A673 (cell line): ENCODE measurements at regions of chr1 and their contacts with region 1.

Region 1: GRCh38 chr1:111441573-111442192 is 7.4 kb downstream of the WDR77 start:
- DNase-seq: peak; percentile 24
- H3K4me3 ChIP-seq: no peak overlapping the region
- H3K27ac ChIP-seq: no peak overlapping the region
- H3K4me1 ChIP-seq: no peaks in the 10 kb centered on the region
- H3K27me3 ChIP-seq: no peaks in the 10 kb centered on the region
- CTCF ChIP-seq: peak; percentile 63

Region 2: GRCh38 chr1:111516005-111516535 is 74.4 kb after region 1 on chr1:
- CTCF ChIA-PET with region 1: no interaction called
- POLR2A ChIA-PET with region 1: no interaction called
- intact Hi-C with region 1: no loop called
- DNase-seq: peak; percentile 28
- H3K4me3 ChIP-seq: no peak overlapping the region
- H3K27ac ChIP-seq: no peak overlapping the region
- H3K4me1 ChIP-seq: no peaks in the 10 kb centered on the region
- H3K27me3 ChIP-seq: peaks cover 8% of the 10 kb centered on the region
- CTCF ChIP-seq: peak; percentile 40

Region 3: GRCh38 chr1:111592389-111593361 is 151.0 kb after region 1 on chr1:
- CTCF ChIA-PET with region 1: no interaction called
- POLR2A ChIA-PET with region 1: interaction called, 20 read pairs
- intact Hi-C with region 1: no loop called
- DNase-seq: peak; percentile 68
- H3K4me3 ChIP-seq: no peak overlapping the region
- H3K27ac ChIP-seq: no peak overlapping the region
- H3K4me1 ChIP-seq: peaks cover 13% of the 10 kb centered on the region
- H3K27me3 ChIP-seq: no peaks in the 10 kb centered on the region
- CTCF ChIP-seq: no peak